PC-9 (cell line): ENCODE measurements at regions of chr16 and their contacts with region 1.

Region 1: GRCh38 chr16:25051406-25052150 is 36.4 kb upstream of the ARHGAP17 start:
- DNase-seq: peak; percentile 23 to 69
- H3K4me3 ChIP-seq: no peak overlapping the region
- H3K27ac ChIP-seq: no peak overlapping the region
- H3K4me1 ChIP-seq: peaks cover 38% of the 10 kb centered on the region
- H3K27me3 ChIP-seq: no peaks in the 10 kb centered on the region
- CTCF ChIP-seq: no peak

Region 2: GRCh38 chr16:25126820-25127232 is 75.2 kb after region 1 on chr16:
- CTCF ChIA-PET with region 1: no interaction called
- POLR2A ChIA-PET with region 1: no interaction called
- intact Hi-C with region 1: loop called (anchors 1 kb)
- DNase-seq: peak; percentile 67 to 81
- H3K4me3 ChIP-seq: no peak overlapping the region
- H3K27ac ChIP-seq: no peak overlapping the region
- H3K4me1 ChIP-seq: peaks cover 9% of the 10 kb centered on the region; the same call in 1 of the 2 replicates
- H3K27me3 ChIP-seq: no peaks in the 10 kb centered on the region
- CTCF ChIP-seq: peak; percentile 77

Region 3: GRCh38 chr16:25279491-25279890 is 227.9 kb after region 1 on chr16:
- CTCF ChIA-PET with region 1: no interaction called
- POLR2A ChIA-PET with region 1: interaction called, 11 read pairs
- intact Hi-C with region 1: no loop called
- DNase-seq: no peak
- H3K4me3 ChIP-seq: no peak overlapping the region
- H3K27ac ChIP-seq: no peak overlapping the region
- H3K4me1 ChIP-seq: no peaks in the 10 kb centered on the region
- H3K27me3 ChIP-seq: peaks cover 6% of the 10 kb centered on the region; the same call in 1 of the 2 replicates
- CTCF ChIP-seq: no peak

Region 4: DNA sequence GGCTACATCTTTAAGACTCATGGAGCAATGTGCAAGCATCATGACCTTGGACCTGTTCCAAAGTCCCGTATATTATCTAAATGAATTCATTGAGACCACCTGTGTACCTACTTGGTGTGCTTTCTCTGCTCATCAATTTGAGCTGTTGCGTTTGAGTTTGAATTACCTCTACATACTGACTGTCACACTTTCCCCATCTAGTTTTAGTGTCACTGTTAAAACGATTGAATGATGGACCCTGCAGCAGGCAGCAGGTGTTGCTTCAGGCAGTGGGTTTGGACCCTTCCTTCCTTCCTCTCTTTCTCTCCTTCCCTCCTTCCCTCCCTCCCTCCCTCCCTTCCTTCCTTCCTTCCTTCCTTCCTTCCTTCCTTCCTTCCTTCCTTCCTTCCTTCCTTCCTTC is 240.0 kb after region 1 on chr16:
- CTCF ChIA-PET with region 1: no interaction called
- POLR2A ChIA-PET with region 1: no interaction called
- intact Hi-C with region 1: no loop called
- DNase-seq: no peak
- H3K4me3 ChIP-seq: no peak overlapping the region
- H3K27ac ChIP-seq: no peak overlapping the region
- H3K4me1 ChIP-seq: no peaks in the 10 kb centered on the region
- H3K27me3 ChIP-seq: peaks cover 60% of the 10 kb centered on the region
- CTCF ChIP-seq: no peak

Region 5: DNA sequence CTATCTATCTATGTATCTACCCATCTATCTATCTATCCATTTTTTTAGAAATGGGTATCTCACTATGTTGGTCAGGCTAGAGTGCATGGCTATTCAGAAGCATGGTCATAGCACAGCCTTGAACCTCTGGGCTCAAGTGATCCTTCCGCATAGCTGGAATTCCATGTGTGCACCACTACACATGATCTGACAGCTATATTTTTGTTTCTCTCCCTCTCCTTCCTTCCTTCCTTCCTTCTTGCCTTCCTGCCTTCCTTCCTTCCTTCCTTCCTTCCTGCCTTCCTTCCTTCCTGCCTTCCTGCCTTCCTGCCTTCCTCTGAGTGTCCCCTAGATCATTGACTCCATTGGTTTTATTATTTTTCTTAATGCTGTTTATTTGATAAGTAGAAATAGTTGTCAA is 748.2 kb after region 1 on chr16:
- CTCF ChIA-PET with region 1: no interaction called
- POLR2A ChIA-PET with region 1: no interaction called
- intact Hi-C with region 1: loop called (anchors 10 kb)
- DNase-seq: no peak
- H3K4me3 ChIP-seq: no peak overlapping the region
- H3K27ac ChIP-seq: no peak overlapping the region
- H3K4me1 ChIP-seq: no peaks in the 10 kb centered on the region
- H3K27me3 ChIP-seq: no peaks in the 10 kb centered on the region; the same call in 1 of the 2 replicates
- CTCF ChIP-seq: no peak